IMR-90 (cell line): ENCODE measurements at regions of chr14 and their contacts with region 1.

Region 1: DNA sequence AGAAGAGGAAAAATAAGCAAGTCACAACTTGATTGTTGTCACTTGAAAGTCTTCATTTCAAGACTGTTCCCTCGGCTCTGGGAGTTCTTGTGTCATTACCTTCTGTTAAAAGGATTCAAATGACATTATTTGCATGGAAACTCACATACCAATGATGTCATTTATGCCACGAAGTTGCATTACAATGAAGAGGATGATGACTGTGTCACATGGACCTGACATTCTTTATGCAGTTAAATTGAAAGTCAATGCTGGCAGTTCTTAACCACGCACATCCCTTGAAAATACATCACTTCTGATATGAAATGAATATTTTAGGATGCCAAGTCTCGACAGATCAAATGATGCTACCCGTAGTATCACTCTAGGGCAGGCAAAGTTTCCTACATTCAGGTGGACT is 1069.5 kb downstream of the VRK1 start:
- DNase-seq: no peak
- ATAC-seq: no peak
- H3K4me3 ChIP-seq: no peak overlapping the region
- H3K27ac ChIP-seq: no peak overlapping the region
- H3K4me1 ChIP-seq: no peaks in the 10 kb centered on the region
- H3K27me3 ChIP-seq: no peaks in the 10 kb centered on the region
- CTCF ChIP-seq: no peak
- POLR2A ChIP-seq: no peak
- RAD21 ChIP-seq: no peak

Region 2: GRCh38 chr14:97329701-97330100 is 537.0 kb before region 1 on chr14:
- CTCF ChIA-PET with region 1: no interaction called
- POLR2A ChIA-PET with region 1: no interaction called
- dilution Hi-C with region 1: no loop called
- in situ Hi-C with region 1: no loop called
- intact Hi-C with region 1: no loop called
- DNase-seq: no peak
- ATAC-seq: no peak
- H3K4me3 ChIP-seq: no peak overlapping the region
- H3K27ac ChIP-seq: no peak overlapping the region
- H3K4me1 ChIP-seq: no peaks in the 10 kb centered on the region
- H3K27me3 ChIP-seq: no peaks in the 10 kb centered on the region
- CTCF ChIP-seq: no peak
- POLR2A ChIP-seq: no peak
- RAD21 ChIP-seq: no peak

Region 3: GRCh38 chr14:97824218-97824617 is 42.4 kb before region 1 on chr14:
- CTCF ChIA-PET with region 1: no interaction called
- POLR2A ChIA-PET with region 1: no interaction called
- dilution Hi-C with region 1: no loop called
- in situ Hi-C with region 1: no loop called
- intact Hi-C with region 1: no loop called
- DNase-seq: no peak
- ATAC-seq: no peak
- H3K4me3 ChIP-seq: no peak overlapping the region
- H3K27ac ChIP-seq: no peak overlapping the region
- H3K4me1 ChIP-seq: no peaks in the 10 kb centered on the region
- H3K27me3 ChIP-seq: no peaks in the 10 kb centered on the region
- CTCF ChIP-seq: no peak
- POLR2A ChIP-seq: no peak
- RAD21 ChIP-seq: no peak

Region 4: DNA sequence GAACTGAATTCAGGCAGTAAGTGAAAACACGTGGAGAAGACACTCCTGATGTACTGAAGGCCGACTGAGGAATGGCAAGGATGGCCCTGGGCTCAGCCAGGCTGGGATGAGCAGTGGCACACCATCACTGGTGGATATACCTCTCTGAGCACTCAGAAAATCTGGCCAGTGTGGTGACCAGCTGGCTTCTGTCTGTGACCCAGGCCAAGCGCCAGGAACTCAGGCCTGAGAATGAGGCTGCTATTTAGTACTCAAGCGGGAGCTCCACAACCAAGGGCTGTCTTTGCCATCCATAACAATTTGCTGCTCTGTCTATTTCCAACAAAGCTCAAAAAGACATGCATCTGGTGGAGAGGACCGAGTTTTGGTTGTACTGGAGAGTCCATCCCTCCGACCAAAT is 819.1 kb after region 1 on chr14:
- CTCF ChIA-PET with region 1: no interaction called
- POLR2A ChIA-PET with region 1: no interaction called
- dilution Hi-C with region 1: no loop called
- in situ Hi-C with region 1: no loop called
- intact Hi-C with region 1: loop called (anchors 5 kb)
- DNase-seq: no peak
- ATAC-seq: no peak
- H3K4me3 ChIP-seq: no peak overlapping the region
- H3K27ac ChIP-seq: no peak overlapping the region
- H3K4me1 ChIP-seq: no peaks in the 10 kb centered on the region
- H3K27me3 ChIP-seq: no peaks in the 10 kb centered on the region
- CTCF ChIP-seq: no peak
- POLR2A ChIP-seq: no peak
- RAD21 ChIP-seq: no peak